ENCODE measurements at regions of chr19 and their contacts with region 1.

Region 1: GRCh38 chr19:41570639-41571112 is 5.3 kb upstream of the CEACAM21 start:
- DNase-seq: peak; percentile 91
- H3K4me3 Mint-ChIP-seq: no peak overlapping the region
- H3K27ac Mint-ChIP-seq: peak overlapping the region; percentile 28
- H3K4me1 Mint-ChIP-seq: peaks cover 35% of the 10 kb centered on the region
- H3K27me3 Mint-ChIP-seq: no peaks in the 10 kb centered on the region

Region 2: DNA sequence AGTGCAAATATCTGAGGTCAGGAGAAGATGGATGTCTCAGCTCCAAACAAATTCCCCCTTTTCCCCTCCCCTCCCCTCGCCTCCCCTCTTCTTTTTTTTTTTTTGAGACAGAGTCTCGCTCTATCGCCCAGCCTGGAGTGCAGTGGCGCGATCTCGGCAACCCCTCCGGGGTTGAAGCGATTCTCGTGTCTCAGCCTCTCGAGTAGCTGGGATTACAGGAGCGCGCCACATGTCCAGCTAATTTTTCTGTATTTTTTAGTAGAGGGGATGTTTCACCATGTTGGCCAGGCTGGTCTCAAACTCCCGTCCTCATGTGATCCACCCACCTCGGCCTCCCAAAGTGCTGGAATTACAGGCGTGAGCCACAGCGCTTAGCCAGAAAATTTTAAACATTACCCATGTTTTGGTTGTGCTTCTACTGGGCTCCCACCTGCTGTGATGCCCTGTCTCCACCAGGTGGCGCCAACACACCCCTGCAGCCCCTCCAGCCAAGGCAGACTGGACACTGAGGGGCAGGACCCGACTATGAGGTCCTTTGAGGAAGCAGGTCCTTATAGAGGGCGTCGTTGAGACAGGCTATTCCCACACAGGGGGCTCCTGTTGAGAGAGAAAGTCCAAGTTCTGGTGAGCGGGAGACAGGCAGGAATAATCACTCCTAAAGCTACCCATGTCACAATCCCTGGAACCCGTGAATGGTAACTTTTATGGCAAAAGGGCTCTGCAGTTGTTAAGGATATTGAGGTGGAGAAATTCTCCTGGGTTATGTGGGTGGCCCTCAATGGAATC is 121.4 kb before region 1 on chr19:
- CTCF ChIA-PET with region 1: interaction called, 185 read pairs
- intact Hi-C with region 1: loop called (anchors 1 kb)
- DNase-seq: peak; percentile 84
- H3K4me3 Mint-ChIP-seq: peak overlapping the region; percentile 77
- H3K27ac Mint-ChIP-seq: peak overlapping the region; percentile 56
- H3K4me1 Mint-ChIP-seq: peaks cover 11% of the 10 kb centered on the region
- H3K27me3 Mint-ChIP-seq: no peaks in the 10 kb centered on the region

Region 3: DNA sequence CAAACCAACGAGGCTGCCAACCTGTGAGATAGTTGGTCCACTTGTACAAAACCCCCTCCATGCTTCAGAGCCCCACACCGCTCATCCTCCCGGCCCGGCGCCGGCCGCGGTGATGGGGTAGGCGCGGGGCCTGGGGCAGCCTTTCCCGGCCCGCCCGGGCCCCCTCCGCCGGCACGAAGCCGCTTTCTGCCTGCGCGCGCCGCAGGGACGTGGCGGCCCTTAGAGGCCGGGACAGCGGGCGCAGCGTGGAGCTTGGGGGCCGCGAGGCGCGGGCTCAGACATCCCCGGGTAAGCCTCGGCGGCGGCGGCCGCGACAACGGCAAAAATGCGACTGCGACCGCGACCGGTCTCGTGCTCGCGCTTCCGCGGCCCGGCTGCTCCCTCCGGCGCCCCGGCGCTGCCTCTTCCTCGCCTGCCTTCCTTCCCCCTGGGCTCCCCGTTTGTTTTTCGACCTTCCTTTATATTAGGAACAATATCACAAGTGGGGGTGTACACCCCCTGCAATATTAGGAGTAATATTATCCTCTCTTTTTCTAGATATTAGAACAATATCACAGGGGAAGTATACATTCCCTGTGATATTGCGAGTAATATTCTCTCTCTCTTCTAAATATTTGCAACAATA is 48.6 kb before region 1 on chr19:
- CTCF ChIA-PET with region 1: no interaction called
- intact Hi-C with region 1: loop called (anchors 1 kb)
- DNase-seq: peak; percentile 39
- H3K4me3 Mint-ChIP-seq: peak overlapping the region; percentile 76
- H3K27ac Mint-ChIP-seq: peak overlapping the region; percentile 81
- H3K4me1 Mint-ChIP-seq: peaks cover 24% of the 10 kb centered on the region
- H3K27me3 Mint-ChIP-seq: no peaks in the 10 kb centered on the region

Region 4: DNA sequence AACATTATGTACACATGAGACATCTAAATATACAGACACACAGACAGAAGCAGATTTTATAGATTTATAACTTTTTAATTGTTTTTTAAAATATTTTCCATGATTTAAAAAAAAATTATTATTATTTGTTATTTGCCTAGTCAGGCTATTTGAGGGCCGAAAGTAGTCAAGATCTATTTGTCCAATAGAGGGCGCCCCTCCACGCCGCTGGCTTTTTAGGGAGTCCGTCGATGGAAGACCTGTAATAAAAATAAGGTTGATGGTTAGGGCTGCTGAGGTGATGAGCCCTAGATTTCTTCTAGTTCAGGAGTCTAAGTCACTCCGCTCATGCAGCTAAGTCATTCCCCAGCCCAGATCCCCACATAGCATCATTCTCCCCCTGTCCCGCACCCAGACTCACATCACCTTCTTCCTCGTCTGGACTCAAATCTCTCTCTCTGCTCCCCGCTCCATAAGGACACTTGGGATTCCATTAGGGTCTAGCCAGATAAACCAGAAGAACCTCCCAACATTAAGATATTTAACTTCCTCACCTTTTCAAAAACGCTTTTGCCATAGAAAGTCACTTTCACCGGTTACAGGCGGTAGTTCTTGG is 28.6 kb before region 1 on chr19:
- CTCF ChIA-PET with region 1: interaction called, 171 read pairs
- intact Hi-C with region 1: loop called (anchors 1 kb)
- DNase-seq: peak; percentile 93
- H3K4me3 Mint-ChIP-seq: peak overlapping the region; percentile 41
- H3K27ac Mint-ChIP-seq: peak overlapping the region; percentile 82
- H3K4me1 Mint-ChIP-seq: peaks cover 65% of the 10 kb centered on the region
- H3K27me3 Mint-ChIP-seq: no peaks in the 10 kb centered on the region

Region 5: GRCh38 chr19:41554907-41555306 is 15.8 kb before region 1 on chr19:
- CTCF ChIA-PET with region 1: interaction called, 45 read pairs
- intact Hi-C with region 1: no loop called
- DNase-seq: peak; percentile 60
- H3K4me3 Mint-ChIP-seq: peak overlapping the region; percentile 37
- H3K27ac Mint-ChIP-seq: peak overlapping the region; percentile 100
- H3K4me1 Mint-ChIP-seq: peaks cover 66% of the 10 kb centered on the region
- H3K27me3 Mint-ChIP-seq: no peaks in the 10 kb centered on the region

Region 6: GRCh38 chr19:41978470-41978869 is 407.8 kb after region 1 on chr19:
- CTCF ChIA-PET with region 1: no interaction called
- intact Hi-C with region 1: no loop called
- DNase-seq: no peak
- H3K4me3 Mint-ChIP-seq: no peak overlapping the region
- H3K27ac Mint-ChIP-seq: no peak overlapping the region
- H3K4me1 Mint-ChIP-seq: no peaks in the 10 kb centered on the region
- H3K27me3 Mint-ChIP-seq: no peaks in the 10 kb centered on the region

Measured in activated naive CD4-positive, alpha-beta T cell treated with anti-CD3 and anti-CD28 coated beads for 36 hours (primary cell).